Activated B cell treated with CpG ODN at 0.5 μM for 24 hours (primary cell): ENCODE measurements at regions of chr3 and their contacts with region 1.

Region 1: DNA sequence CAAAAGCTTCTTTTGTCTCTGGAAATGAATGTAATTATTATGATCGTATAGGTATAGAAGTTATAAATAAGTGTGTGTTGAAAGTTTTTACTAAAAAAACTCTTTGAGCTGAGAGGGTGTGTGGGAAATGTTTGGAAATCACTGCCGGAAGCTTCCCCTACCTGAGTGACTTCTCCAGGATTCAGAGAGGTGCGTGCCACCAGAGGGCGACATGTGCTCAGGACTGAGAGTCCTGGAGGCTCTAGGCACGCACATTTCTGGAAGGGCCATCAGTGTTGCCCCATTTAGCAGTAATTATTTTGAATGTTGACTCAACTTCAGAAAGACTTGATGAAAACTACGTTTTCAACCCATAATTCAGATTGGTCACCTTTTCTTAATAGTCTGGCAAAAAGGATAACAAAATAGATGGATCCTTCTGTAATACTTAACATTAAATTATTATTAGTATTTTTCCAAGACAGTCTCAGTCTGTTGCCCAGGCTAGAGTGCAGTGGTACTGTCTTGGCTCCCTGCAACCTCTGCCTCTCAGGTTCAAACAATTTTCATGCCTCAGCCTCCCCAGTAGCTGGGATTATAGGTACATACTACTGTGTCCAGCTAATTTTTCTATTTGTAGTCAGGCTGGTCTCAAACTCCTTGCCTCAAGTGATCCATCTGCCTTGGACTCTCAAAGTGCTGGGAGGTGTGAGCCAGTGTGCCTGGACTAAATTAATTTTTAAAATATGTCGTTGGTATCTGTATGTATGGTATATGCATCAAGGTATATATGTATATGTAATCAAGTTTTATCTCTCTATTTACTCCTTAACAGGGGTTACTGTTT is 34.5 kb downstream of the GPR171 start:
- DNase-seq: peak; percentile 54
- ATAC-seq: no peak
- H3K4me3 Mint-ChIP-seq: no peak overlapping the region
- H3K27ac Mint-ChIP-seq: no peak overlapping the region
- H3K4me1 Mint-ChIP-seq: peaks cover 43% of the 10 kb centered on the region
- H3K27me3 Mint-ChIP-seq: no peaks in the 10 kb centered on the region
- CTCF ChIP-seq: peak; percentile 65

Region 2: DNA sequence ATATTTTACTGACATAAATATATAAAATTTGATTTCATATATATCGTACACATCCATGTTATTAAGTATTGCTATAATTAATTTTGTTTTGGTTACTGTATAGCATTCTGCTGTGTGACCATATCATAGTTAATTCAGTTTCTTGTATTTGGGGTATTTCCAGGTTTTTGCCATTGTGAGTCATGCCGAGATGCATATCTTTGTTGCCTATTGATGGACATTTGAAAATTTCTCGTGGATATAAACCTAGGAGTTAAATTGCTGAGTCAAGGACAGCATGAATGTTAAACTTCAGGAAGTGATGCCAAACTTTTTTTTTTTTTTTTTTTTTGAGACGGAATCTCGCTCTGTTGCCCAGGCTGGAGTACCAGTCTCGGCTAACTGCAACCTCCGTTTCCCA is 68.3 kb after region 1 on chr3:
- CTCF ChIA-PET with region 1: interaction called, 63 read pairs
- POLR2A ChIA-PET with region 1: interaction called, 7 read pairs
- intact Hi-C with region 1: no loop called
- DNase-seq: no peak
- ATAC-seq: no peak
- H3K4me3 Mint-ChIP-seq: no peak overlapping the region
- H3K27ac Mint-ChIP-seq: no peak overlapping the region
- H3K4me1 Mint-ChIP-seq: peaks cover 9% of the 10 kb centered on the region
- H3K27me3 Mint-ChIP-seq: no peaks in the 10 kb centered on the region
- CTCF ChIP-seq: no peak

Region 3: GRCh38 chr3:151276687-151277042 is 108.2 kb after region 1 on chr3:
- CTCF ChIA-PET with region 1: interaction called, 122 read pairs
- POLR2A ChIA-PET with region 1: interaction called, 4 read pairs
- intact Hi-C with region 1: loop called (anchors 1 kb)
- DNase-seq: peak; percentile 33
- ATAC-seq: peak; percentile 77
- H3K4me3 Mint-ChIP-seq: peak overlapping the region; percentile 75
- H3K27ac Mint-ChIP-seq: peak overlapping the region; percentile 97
- H3K4me1 Mint-ChIP-seq: peaks cover 82% of the 10 kb centered on the region
- H3K27me3 Mint-ChIP-seq: no peaks in the 10 kb centered on the region
- CTCF ChIP-seq: no peak

Region 4: GRCh38 chr3:151327571-151328198 is 159.2 kb after region 1 on chr3:
- CTCF ChIA-PET with region 1: interaction called, 3 read pairs
- POLR2A ChIA-PET with region 1: no interaction called
- intact Hi-C with region 1: loop called (anchors 2 kb)
- DNase-seq: no peak
- ATAC-seq: peak; percentile 30
- H3K4me3 Mint-ChIP-seq: peak overlapping the region; percentile 82
- H3K27ac Mint-ChIP-seq: peak overlapping the region; percentile 90
- H3K4me1 Mint-ChIP-seq: peaks cover 33% of the 10 kb centered on the region
- H3K27me3 Mint-ChIP-seq: no peaks in the 10 kb centered on the region
- CTCF ChIP-seq: no peak

Region 5: GRCh38 chr3:151838583-151839312 is 670.3 kb after region 1 on chr3:
- CTCF ChIA-PET with region 1: interaction called, 8 read pairs
- POLR2A ChIA-PET with region 1: no interaction called
- intact Hi-C with region 1: loop called (anchors 1 kb)
- DNase-seq: no peak
- ATAC-seq: peak; percentile 68
- H3K4me3 Mint-ChIP-seq: no peak overlapping the region
- H3K27ac Mint-ChIP-seq: no peak overlapping the region
- H3K4me1 Mint-ChIP-seq: no peaks in the 10 kb centered on the region
- H3K27me3 Mint-ChIP-seq: peaks cover 3% of the 10 kb centered on the region
- CTCF ChIP-seq: peak; percentile 55